ENCODE measurements at regions of chr1 and their contacts with region 1.

Region 1: GRCh38 chr1:67430352-67431155 is at the start of gene SERBP1:
- DNase-seq: peak; percentile 99
- ATAC-seq: peak; percentile 99
- total RNA-seq, gene SERBP1: 123 TPM

Region 2: DNA sequence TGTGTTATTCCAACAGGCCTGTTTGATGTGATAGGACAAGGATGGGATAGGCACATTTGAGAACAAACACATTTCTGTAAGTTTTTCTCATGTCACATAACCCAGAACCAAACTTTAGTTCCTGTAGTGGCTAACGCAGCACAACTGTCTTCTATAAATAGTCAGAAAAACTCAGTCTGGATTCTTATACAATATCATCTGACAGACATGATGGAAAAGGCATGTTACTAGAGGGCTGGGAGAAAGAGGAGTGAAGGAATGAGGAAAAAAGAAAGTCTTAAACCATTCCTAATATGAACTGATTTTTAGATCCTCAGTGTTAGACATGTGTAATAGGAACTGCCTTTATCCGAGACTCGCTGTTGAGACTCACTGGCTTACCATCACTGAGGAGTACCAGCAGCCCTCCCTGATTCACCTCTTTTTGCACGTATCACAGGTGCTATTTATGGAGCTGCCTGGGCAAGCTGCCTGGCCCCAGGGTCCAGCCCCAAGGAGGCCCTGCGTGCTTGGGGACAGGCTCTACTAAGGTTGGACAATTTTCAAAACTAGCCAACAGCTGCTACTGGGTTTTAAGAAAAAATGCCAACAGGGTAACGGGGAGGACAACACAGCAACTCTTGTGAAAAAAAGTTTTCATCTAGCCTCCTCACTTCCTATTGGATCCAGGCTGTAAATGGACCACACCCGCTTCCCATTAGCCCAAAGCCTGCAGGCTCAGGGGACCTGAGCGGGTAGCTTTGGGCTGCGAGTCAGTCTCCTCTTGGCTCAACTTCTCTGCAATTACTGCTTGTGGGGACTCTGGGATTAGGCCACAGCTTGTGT is 30.3 kb after region 1 on chr1:
- intact Hi-C with region 1: loop called (anchors 2 kb)
- DNase-seq: peak; percentile 66
- ATAC-seq: peak; percentile 94

Region 3: GRCh38 chr1:67748630-67749029 is 318.1 kb after region 1 on chr1:
- intact Hi-C with region 1: loop called (anchors 10 kb)
- DNase-seq: no peak
- ATAC-seq: peak; percentile 55

Region 4: DNA sequence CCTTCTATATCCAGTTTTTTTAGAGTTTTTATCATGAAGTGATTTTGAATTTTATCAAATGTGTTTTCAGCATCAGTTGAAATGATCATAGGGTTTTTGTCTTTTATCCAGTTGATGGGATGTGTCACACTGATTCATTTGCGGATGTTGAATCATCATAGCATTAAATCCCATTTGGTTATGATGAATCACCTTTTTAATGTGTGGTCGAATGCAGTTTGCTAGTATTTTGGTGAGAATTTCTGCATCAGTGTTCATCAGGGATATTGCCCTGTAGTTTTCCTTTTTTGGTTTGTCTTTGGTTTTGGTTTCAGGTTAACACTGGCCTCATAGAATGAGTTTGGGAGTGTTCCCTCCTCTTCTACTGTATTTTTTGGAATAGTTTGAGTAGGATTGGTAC is 539.5 kb after region 1 on chr1:
- intact Hi-C with region 1: no loop called
- DNase-seq: no peak
- ATAC-seq: no peak